ENCODE measurements at regions of chr10 and their contacts with region 1.

Region 1: DNA sequence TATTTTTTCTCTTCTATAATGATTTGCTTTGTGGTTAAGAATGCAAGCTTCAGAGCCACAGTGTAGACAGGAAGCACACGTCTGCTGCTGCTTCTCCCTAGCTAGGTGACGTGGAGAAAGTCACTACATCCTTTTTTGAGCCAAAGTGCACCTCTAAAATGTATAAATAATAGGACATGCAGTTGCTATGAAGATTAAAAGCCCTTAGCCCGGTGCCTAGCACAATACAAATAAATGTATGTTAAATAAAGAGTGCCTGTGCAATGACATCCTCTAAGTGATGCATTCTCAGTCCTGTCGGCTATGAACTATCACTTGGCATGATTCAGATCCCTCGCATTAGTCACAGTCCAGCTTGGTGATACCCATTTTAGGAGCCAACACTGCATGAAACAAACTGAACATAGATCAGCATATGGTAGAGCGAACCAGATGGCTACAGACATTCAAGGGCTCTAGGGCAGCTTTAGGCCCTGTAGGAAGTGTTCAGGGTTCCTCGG is 4.8 kb upstream of the TRDMT1 start:
- DNase-seq: no peak
- ATAC-seq: peak; percentile 70
- H3K4me3 Mint-ChIP-seq: peak overlapping the region; percentile 68
- H3K27ac Mint-ChIP-seq: peak overlapping the region; percentile 94
- H3K4me1 Mint-ChIP-seq: peaks cover 47% of the 10 kb centered on the region
- H3K27me3 Mint-ChIP-seq: no peaks in the 10 kb centered on the region

Region 2: GRCh38 chr10:17138460-17139042 is 67.7 kb before region 1 on chr10:
- POLR2A ChIA-PET with region 1: no interaction called
- DNase-seq: no peak
- ATAC-seq: no peak
- H3K4me3 Mint-ChIP-seq: no peak overlapping the region
- H3K27ac Mint-ChIP-seq: no peak overlapping the region
- H3K4me1 Mint-ChIP-seq: peaks cover 5% of the 10 kb centered on the region
- H3K27me3 Mint-ChIP-seq: no peaks in the 10 kb centered on the region

Region 3: GRCh38 chr10:17216217-17216900 is 10.1 kb after region 1 on chr10:
- POLR2A ChIA-PET with region 1: interaction called, 22 read pairs
- DNase-seq: no peak
- ATAC-seq: peak; percentile 99
- H3K4me3 Mint-ChIP-seq: peak overlapping the region; percentile 58
- H3K27ac Mint-ChIP-seq: peak overlapping the region; percentile 95
- H3K4me1 Mint-ChIP-seq: peaks cover 40% of the 10 kb centered on the region
- H3K27me3 Mint-ChIP-seq: no peaks in the 10 kb centered on the region

Measured in activated naive CD8-positive, alpha-beta T cell treated with anti-CD3 and anti-CD28 coated beads, Interleukin-2, amount 10 ng/mL, durations not matched to agents 7 days and 5 days (primary cell).